HEK293T (cell line): ENCODE measurements at regions of chr19 and their contacts with region 1.

Region 1: GRCh38 chr19:14689598-14690503 is at the start of gene ZNF333:
- DNase-seq: peak; percentile 97

Region 2: GRCh38 chr19:14571695-14572490 is 118.0 kb before region 1 on chr19 and contains the start of gene NDUFB7:
- CTCF ChIA-PET with region 1: interaction called, 51 read pairs
- POLR2A ChIA-PET with region 1: interaction called, 16 read pairs
- DNase-seq: peak; percentile 90

Region 3: DNA sequence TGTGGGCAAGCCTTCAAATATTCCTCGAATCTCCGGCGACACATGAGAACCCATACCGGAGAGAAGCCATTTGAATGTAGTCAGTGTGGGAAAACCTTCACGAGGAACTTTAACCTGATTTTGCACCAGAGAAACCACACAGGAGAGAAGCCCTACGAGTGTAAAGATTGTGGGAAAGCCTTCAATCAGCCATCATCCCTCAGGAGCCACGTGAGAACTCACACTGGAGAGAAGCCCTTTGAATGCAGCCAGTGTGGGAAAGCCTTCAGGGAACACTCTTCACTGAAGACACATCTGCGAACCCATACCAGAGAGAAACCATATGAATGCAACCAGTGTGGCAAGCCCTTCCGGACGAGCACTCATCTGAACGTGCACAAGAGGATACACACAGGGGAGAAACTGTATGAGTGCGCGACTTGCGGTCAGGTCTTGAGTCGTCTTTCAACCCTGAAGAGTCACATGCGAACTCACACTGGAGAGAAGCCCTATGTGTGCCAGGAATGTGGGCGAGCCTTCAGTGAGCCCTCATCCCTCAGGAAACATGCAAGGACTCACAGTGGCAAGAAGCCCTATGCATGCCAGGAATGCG is 28.8 kb after region 1 on chr19:
- CTCF ChIA-PET with region 1: no interaction called
- POLR2A ChIA-PET with region 1: no interaction called
- DNase-seq: no peak